ENCODE measurements at regions of chr7 and their contacts with region 1.

Region 1: GRCh38 chr7:43954524-43955228 is 28.4 kb downstream of the UBE2D4 start:
- DNase-seq: peak; percentile 69
- ATAC-seq: peak; percentile 100
- H3K4me3 ChIP-seq: no peak overlapping the region
- H3K27ac ChIP-seq: no peak overlapping the region
- H3K4me1 ChIP-seq: no peaks in the 10 kb centered on the region
- H3K27me3 ChIP-seq: no peaks in the 10 kb centered on the region
- CTCF ChIP-seq: peak; percentile 83

Region 2: DNA sequence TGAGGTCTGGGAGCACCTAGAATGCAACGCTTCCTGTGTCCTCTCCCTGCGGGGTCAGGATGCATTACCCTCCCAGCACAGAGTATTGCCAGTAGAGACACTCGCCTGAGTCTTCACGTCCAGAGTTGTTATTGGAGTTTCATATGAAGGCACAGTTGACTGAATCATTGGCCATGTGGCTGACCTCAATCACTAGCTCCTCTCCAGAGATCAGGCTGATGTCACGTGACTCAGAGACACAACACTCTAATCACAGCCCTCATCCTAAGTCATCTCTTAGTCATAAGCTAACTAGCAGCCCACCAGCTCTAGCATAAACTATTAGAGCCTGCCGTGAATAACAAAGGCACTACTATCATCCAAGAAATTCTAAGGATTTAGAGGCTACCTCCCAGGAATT is 734.4 kb before region 1 on chr7:
- CTCF ChIA-PET with region 1: no interaction called
- POLR2A ChIA-PET with region 1: no interaction called
- intact Hi-C with region 1: no loop called
- DNase-seq: peak; percentile 30
- ATAC-seq: no peak
- H3K4me3 ChIP-seq: no peak overlapping the region
- H3K27ac ChIP-seq: no peak overlapping the region
- H3K4me1 ChIP-seq: no peaks in the 10 kb centered on the region
- H3K27me3 ChIP-seq: no peaks in the 10 kb centered on the region
- CTCF ChIP-seq: no peak

Region 3: DNA sequence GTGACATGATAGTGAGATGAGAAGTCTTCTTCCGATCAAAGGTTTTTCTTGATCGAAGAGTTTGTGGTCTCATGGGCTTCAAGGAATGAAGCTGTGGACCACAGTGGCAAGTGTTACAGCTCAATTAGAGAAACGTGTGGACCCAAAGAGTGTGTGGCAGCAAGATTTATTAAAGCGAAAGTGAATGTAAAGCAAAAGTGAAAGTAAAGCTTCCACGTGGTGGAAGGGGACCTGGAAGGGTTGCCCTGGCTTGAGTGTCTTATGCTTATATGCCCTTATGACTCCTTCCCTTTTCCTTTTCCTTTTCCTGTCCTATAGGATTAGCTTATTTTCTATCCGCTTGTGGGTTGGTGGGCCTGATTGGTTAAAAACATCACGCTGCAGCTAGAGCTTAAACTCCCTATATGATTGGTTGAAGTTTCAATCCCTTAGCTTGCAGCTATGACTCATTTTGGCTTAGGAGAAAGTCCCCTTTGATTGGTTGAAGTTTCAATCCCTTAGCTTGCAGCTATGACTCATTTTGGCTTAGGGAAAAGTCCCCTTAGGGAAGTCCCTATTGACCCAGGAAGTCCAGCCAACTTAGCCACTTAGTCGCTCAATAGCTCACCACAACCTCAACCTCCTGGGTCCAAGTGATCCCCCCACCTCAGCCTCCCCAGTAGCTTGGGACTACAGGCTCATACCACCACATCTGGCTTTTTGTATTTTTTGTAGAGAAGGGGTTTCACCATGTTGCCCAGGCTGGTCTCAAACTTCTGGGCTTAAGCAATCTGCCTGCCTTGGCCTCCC is 120.0 kb before region 1 on chr7:
- CTCF ChIA-PET with region 1: no interaction called
- POLR2A ChIA-PET with region 1: no interaction called
- intact Hi-C with region 1: loop called (anchors 2 kb)
- DNase-seq: peak; percentile 46
- ATAC-seq: no peak
- H3K4me3 ChIP-seq: no peak overlapping the region
- H3K27ac ChIP-seq: no peak overlapping the region
- H3K4me1 ChIP-seq: 0 out of 2 replicates have a peak, but pooled peaks cover 3% of the 10 kb centered on the region
- H3K27me3 ChIP-seq: no peaks in the 10 kb centered on the region
- CTCF ChIP-seq: no peak

Region 4: GRCh38 chr7:43844031-43844656 is 110.5 kb before region 1 on chr7:
- CTCF ChIA-PET with region 1: interaction called, 4 read pairs
- POLR2A ChIA-PET with region 1: interaction called, 20 read pairs
- intact Hi-C with region 1: loop called (anchors 2 kb)
- DNase-seq: peak; percentile 56
- ATAC-seq: peak; percentile 66
- H3K4me3 ChIP-seq: no peak overlapping the region
- H3K27ac ChIP-seq: no peak overlapping the region
- H3K4me1 ChIP-seq: peaks cover 7% of the 10 kb centered on the region; the same call in 1 of the 2 replicates
- H3K27me3 ChIP-seq: no peaks in the 10 kb centered on the region
- CTCF ChIP-seq: no peak

Region 5: DNA sequence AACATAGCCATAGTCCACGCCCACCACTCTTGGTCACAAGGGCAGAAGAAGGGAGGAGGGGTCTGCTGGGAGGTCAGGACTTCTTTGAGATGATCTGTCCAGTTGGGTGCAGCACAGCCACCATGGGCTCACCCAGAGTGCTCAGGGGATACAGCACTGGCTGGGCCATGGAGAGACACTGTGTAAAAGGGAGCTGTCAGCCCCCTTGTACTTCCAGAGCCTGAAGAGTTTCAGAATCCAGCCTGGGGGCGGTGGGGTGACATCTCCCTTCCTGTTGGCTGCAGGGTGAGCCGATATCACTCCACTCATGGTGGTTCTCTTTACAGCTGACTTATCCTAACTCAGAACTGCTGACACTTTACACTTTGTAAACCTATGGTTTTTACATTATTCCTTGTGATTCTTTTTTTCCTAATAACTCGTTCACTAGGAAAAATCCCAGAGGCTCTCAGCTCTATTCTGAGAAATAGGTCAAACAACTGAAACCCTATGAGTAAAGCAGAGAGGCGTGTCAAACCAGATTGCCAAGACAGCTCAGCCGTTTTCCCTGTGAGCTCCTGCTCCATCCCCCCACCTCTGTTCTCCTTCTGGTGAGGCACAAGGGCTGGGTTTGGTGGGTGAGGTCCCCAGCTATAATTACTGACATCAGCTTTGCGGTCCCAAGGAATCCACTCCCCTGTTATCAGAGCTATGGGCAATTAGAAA is 82.1 kb before region 1 on chr7:
- CTCF ChIA-PET with region 1: no interaction called
- POLR2A ChIA-PET with region 1: interaction called, 4 read pairs
- intact Hi-C with region 1: loop called (anchors 1 kb)
- DNase-seq: peak; percentile 91
- ATAC-seq: peak; percentile 59
- H3K4me3 ChIP-seq: peak overlapping the region; percentile 54
- H3K27ac ChIP-seq: peak overlapping the region; percentile 100
- H3K4me1 ChIP-seq: peaks cover 63% of the 10 kb centered on the region
- H3K27me3 ChIP-seq: no peaks in the 10 kb centered on the region
- CTCF ChIP-seq: no peak

Region 6: GRCh38 chr7:43888993-43889945 is 65.4 kb before region 1 on chr7:
- CTCF ChIA-PET with region 1: no interaction called
- POLR2A ChIA-PET with region 1: no interaction called
- intact Hi-C with region 1: no loop called
- DNase-seq: no peak
- ATAC-seq: no peak; the same call in 1 of the 2 replicates
- H3K4me3 ChIP-seq: no peak overlapping the region
- H3K27ac ChIP-seq: no peak overlapping the region
- H3K4me1 ChIP-seq: no peaks in the 10 kb centered on the region
- H3K27me3 ChIP-seq: no peaks in the 10 kb centered on the region
- CTCF ChIP-seq: no peak

Measured in PC-3 (cell line).